Sciatic nerve (tissue), 2 donors: ENCODE measurements at regions of chr12 and their contacts with region 1.

Region 1: DNA sequence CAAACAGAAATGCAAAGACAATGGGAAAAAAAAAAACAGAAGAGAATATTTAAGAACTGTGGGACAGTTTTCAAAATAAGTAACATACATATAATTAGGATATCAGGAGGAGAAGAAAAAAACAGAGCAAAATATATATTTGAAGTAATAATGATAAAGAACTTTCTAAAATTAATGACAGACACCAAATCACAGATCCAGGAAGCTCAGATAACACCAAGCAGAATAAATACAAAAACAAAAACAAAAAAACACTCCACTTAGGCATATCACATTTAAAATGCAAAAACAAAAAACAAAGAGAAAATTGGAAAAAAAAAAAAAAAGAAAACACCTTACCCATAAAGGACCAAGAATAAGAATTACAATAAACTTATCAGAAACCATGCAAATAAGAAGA is 9.6 kb upstream of the RFX4 start:
- DNase-seq: no peak
- ATAC-seq: no peak

Region 2: DNA sequence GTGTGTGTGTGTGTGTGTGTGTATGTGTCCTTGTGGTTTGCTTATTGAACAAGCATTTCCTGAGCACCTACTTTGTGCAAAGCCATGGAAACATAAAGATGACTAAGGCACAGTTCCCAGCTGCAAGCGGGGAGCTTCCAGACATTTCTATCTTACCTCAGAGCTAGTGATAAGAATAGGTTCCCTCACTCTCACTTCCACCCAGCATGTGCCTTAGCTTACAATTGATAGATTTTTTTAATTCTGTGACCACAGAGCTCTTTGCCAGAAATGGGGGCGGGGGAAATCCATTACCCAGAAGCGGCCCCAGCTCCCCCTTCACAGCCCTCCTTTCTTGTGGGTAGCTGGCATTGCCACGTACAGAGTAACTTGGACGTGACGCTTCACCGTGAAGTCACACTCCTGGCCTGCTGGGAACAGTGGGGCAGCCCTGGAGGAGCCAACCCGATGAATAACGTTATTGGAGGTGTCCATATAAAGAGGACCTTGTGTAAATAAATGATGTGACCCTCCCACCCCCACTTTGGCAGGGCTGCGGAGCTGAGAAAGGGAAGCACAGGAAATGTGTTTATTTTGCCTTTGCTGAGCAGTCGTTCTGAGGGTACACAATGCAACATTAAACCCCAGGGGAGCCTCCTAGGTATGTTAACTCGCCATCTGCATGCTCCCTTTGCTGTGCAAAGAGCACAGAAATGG is 1877.6 kb before region 1 on chr12:
- intact Hi-C with region 1: loop called (anchors 5 kb)
- DNase-seq: no peak
- ATAC-seq: peak; percentile 76